ENCODE measurements at regions of chr1 and their contacts with region 1.

Region 1: DNA sequence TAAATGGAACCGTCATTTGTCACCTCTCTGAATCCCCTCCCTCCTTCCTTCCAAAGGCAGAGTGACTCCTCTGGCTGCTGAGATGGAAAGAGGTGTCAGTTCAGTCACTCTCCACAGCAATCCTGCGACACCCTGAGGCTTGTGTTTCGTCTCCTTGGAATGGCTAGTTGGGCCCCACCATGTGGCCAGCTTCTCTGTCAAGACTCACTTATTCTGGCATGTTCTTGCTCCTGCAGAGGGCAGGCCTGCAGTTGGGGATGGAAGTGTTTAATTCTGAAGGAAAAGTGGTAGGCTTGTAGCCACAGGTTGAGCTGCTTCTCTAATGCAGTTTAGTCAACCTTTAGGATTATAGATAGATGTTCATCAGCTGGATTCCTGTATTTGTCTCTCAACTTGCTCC is 149.6 kb downstream of the LMO4 start:
- DNase-seq: peak in 1 of 10 donors; percentile 38
- H3K4me3 ChIP-seq: no peak overlapping the region
- H3K27ac ChIP-seq: no peak overlapping the region
- H3K27me3 ChIP-seq: no peaks in the 10 kb centered on the region
- CTCF ChIP-seq: peak in 17 of 56 donors; percentile 12 to 39 (median 27)

Region 2: DNA sequence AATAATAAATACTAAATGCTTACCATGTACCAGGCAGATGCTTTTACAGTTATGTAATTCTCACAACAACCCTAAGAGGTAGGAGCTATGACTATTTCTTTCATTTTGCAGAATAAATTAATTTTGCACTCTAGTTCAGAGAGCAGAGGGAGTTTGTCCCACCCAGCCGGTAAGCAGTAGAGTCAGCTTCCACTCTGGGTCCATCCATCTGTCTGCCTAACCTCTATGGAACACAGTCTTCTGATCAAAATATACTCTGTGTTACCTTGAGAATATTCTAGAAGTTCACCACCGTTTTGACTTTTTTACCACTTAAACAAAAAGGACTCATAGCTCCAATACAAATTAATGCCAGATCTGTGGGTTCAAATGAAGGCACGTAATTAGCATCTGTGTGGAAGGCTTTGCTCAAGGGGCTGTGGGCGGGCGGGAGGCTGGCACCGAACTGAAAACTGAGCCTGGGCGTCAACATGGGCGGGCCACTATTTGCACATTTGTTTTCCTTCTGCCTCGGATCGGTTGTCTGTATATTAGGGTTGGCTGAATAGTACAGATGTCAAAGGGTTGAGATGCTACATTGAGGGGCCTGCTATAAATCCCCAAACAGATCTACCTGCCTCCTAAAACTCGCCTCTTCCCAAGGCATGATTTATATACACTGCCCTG is 182.7 kb before region 1 on chr1:
- intact Hi-C with region 1: no loop called
- DNase-seq: no peak
- H3K4me3 ChIP-seq: no peak overlapping the region
- H3K27ac ChIP-seq: no peak overlapping the region
- H3K27me3 ChIP-seq: no peaks in the 10 kb centered on the region
- CTCF ChIP-seq: no peak

Region 3: GRCh38 chr1:87410776-87411480 is 67.3 kb before region 1 on chr1:
- intact Hi-C with region 1: loop called in 1 of 2 experiments (anchors 10 kb)
- DNase-seq: peak; percentile 41 to 96 (median 93)
- H3K4me3 ChIP-seq: peak overlapping the region in 2 of 59 donors; percentile 3 to 27
- H3K27ac ChIP-seq: peak overlapping the region; percentile 35 to 95 (median 81)
- H3K27me3 ChIP-seq: no peaks in the 10 kb centered on the region
- CTCF ChIP-seq: peak in 5 of 56 donors; percentile 10 to 22 (median 19)